GM12878 (cell line): ENCODE measurements at regions of chr1 and their contacts with region 1.

Region 1: DNA sequence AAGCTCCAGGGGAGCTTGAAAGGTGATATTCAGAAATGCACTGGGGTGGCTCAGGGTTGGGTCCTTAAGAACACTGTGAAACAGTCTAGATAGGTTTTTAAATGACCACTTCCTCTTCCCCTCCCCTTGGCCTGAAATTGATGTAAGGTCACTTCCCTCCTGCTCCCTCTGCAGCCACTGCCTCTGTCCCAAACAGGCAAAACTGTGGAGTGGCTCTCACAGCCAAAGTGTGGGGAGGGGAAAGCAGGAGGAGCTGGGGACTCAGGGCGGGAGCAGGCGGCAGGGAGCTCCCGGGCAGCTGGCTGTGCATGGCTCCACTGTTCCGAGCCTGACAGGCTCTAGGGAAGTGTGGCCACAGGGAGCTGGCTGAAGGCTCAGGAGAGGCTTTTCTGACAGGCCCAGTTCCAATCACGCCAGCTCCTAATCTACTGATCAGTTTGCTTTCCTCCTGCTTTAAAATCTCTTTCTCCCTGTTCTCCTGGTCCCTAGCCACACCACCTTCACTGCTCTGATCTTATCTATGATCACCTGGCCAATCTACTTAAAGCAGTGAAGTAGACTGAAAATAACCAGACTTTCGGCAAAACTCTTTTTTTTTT is 5.1 kb upstream of the CSRP1 start:
- DNase-seq: peak; percentile 35
- ATAC-seq: peak; percentile 73
- H3K4me3 ChIP-seq: peak overlapping the region; percentile 43; the same call in 1 of the 2 replicates
- H3K27ac ChIP-seq: no peak overlapping the region; the same call in none of the 2 replicates
- H3K4me1 ChIP-seq: peaks cover 42% of the 10 kb centered on the region
- H3K27me3 ChIP-seq: no peaks in the 10 kb centered on the region
- CTCF ChIP-seq: peak in 1 of 3 experiments; percentile 3; a peak in 1 of 6 replicates
- EP300 ChIP-seq: no peak
- POLR2A ChIP-seq: no peak
- RAD21 ChIP-seq: no peak

Region 2: GRCh38 chr1:201348211-201348566 is 163.9 kb before region 1 on chr1:
- CTCF ChIA-PET with region 1: interaction called, 15 read pairs
- POLR2A ChIA-PET with region 1: no interaction called
- RAD21 ChIA-PET with region 1: interaction called, 19 read pairs
- SMC1A ChIA-PET with region 1: interaction called, 6 read pairs
- in situ Hi-C with region 1: no loop called
- intact Hi-C with region 1: no loop called
- DNase-seq: no peak
- ATAC-seq: peak; percentile 89
- H3K4me3 ChIP-seq: no peak overlapping the region
- H3K27ac ChIP-seq: no peak overlapping the region
- H3K4me1 ChIP-seq: no peaks in the 10 kb centered on the region
- H3K27me3 ChIP-seq: peaks cover 0 to 3% of the 10 kb centered on the region in 2 experiments; a peak in 2 of 4 replicates
- CTCF ChIP-seq: peak; percentile 72 to 78 (median 74)
- EP300 ChIP-seq: no peak
- POLR2A ChIP-seq: no peak
- RAD21 ChIP-seq: peak; percentile 58

Region 3: DNA sequence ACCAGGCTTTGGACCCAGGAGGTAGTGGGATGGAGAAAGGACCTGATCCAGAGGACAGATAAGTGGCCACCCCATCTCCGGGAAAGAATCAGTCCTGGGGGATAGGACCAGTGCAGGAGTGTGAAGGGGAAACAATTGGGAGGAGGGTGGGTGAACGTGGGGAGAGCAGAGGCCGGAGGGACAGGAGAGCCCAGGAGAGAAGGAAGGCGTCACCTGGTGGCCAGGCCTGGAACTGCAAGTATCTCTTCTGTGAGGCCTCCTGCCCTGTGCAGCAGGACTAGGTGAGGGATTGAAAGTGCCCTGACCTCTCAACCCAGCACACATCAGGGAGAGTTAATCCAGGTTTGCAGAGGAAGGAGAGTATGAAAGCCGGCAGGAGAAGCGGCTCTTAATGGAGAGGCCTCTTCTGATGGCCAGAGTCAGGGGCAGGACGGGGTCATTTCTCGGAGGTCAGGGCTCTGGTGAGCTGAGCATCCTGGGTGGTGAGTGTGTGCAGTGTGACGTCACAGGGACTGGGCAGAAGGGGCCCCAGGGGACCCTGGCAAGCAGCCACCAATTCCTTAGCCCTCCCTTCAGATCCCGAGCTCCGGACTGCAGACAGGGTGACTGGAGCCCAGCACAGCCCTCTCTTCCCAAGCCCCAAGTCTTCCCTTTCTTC is 103.7 kb before region 1 on chr1:
- CTCF ChIA-PET with region 1: interaction called, 50 read pairs
- POLR2A ChIA-PET with region 1: interaction called, 3 read pairs
- RAD21 ChIA-PET with region 1: interaction called, 11 read pairs
- SMC1A ChIA-PET with region 1: interaction called, 7 read pairs
- in situ Hi-C with region 1: no loop called
- intact Hi-C with region 1: no loop called
- DNase-seq: no peak
- ATAC-seq: peak; percentile 51
- H3K4me3 ChIP-seq: no peak overlapping the region
- H3K27ac ChIP-seq: no peak overlapping the region
- H3K4me1 ChIP-seq: peaks cover 35% of the 10 kb centered on the region
- H3K27me3 ChIP-seq: no peaks in the 10 kb centered on the region; a peak in 1 of 4 replicates
- CTCF ChIP-seq: peak; percentile 96 to 99 (median 98); a peak in 5 of 6 replicates
- EP300 ChIP-seq: no peak
- POLR2A ChIP-seq: no peak
- RAD21 ChIP-seq: peak; percentile 70

Region 4: GRCh38 chr1:201447911-201448871 is 63.8 kb before region 1 on chr1:
- CTCF ChIA-PET with region 1: interaction called, 309 read pairs
- POLR2A ChIA-PET with region 1: interaction called, 32 read pairs
- RAD21 ChIA-PET with region 1: interaction called, 146 read pairs
- SMC1A ChIA-PET with region 1: interaction called, 103 read pairs
- in situ Hi-C with region 1: loop called (anchors 5 kb)
- intact Hi-C with region 1: loop called (anchors 1 kb)
- DNase-seq: no peak
- ATAC-seq: peak; percentile 98
- H3K4me3 ChIP-seq: no peak overlapping the region
- H3K27ac ChIP-seq: no peak overlapping the region
- H3K4me1 ChIP-seq: peaks cover 16% of the 10 kb centered on the region
- H3K27me3 ChIP-seq: no peaks in the 10 kb centered on the region
- CTCF ChIP-seq: peak; percentile 87 to 95 (median 91)
- EP300 ChIP-seq: no peak
- POLR2A ChIP-seq: no peak
- RAD21 ChIP-seq: peak; percentile 77

Region 5: DNA sequence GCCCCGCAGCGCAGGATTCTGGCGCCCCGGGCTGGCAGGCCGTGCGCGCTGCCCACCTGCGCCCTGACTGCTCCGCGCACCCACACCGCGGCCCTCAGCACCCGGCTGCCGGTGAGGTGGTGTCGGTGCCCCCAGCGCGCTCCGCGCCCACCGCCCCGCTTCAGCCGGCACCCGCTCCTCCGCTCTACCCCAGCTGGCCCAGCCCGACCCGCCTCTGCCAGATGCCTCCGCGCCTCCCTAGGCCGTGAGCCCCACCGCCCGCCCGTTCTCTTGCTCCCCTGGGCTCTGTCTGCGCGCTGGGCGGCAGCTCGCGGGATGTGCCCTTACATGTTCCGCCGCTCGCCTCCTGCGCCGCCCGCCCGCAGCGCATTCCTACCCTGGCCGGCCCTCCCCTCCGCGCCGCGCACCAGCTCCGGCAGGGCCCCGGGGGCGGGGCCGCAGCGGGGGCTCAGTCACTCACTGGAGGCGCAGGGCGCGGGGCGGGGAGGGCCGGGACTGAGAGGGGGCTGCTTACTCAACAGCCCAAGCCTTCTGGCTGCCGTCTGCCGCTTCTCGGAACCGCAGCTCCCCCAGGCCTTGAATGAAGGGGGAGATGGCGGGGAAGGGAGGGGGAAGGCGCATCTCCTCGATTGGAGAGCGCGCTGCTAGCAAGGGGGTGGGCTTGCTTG is 43.1 kb before region 1 on chr1 and contains the start of gene PHLDA3:
- CTCF ChIA-PET with region 1: interaction called, 19 read pairs
- POLR2A ChIA-PET with region 1: interaction called, 5 read pairs
- RAD21 ChIA-PET with region 1: interaction called, 7 read pairs
- SMC1A ChIA-PET with region 1: interaction called, 4 read pairs
- in situ Hi-C with region 1: no loop called
- intact Hi-C with region 1: no loop called
- DNase-seq: no peak
- ATAC-seq: peak; percentile 88
- H3K4me3 ChIP-seq: peak within 1 kb of the TSS; percentile 96
- H3K27ac ChIP-seq: peak within 1 kb of the TSS; percentile 67
- H3K4me1 ChIP-seq: peaks cover 11% of the 10 kb centered on the region
- H3K27me3 ChIP-seq: no peaks in the 10 kb centered on the region
- CTCF ChIP-seq: no peak
- EP300 ChIP-seq: 0 out of 4 replicates have a peak, but pooled peaks of 1 of the 2 experiments have one; percentile 17
- POLR2A ChIP-seq: peak; percentile 89
- RAD21 ChIP-seq: no peak
- polyA plus RNA-seq, gene PHLDA3: 0.60 to 2.0 TPM

Region 6: DNA sequence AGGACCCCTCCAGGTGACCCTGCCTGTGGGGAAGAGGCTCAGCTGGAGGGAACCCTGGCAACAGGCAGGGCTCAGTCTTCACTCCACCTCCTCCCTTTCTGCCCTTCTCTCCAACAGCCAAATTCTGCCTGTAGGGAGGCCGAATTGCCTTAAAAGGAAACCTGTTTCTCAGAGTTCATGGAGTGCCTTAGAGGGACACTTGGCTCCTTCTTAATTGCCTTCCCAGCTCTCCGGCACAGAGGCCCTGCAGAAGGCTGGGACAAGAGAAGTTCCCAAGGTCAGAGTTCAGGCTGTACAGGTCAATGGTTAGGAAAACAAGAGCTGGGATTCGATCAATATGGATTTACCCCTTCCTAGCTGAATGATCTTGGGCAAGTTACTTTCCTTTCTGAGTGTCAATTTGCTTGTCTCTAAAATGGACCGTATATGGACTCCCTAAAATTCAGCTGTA is 11.3 kb before region 1 on chr1:
- CTCF ChIA-PET with region 1: interaction called, 144 read pairs
- POLR2A ChIA-PET with region 1: interaction called, 6 read pairs
- RAD21 ChIA-PET with region 1: interaction called, 22 read pairs
- SMC1A ChIA-PET with region 1: interaction called, 56 read pairs
- in situ Hi-C with region 1: no loop called
- intact Hi-C with region 1: no loop called
- DNase-seq: no peak
- ATAC-seq: no peak
- H3K4me3 ChIP-seq: no peak overlapping the region
- H3K27ac ChIP-seq: no peak overlapping the region
- H3K4me1 ChIP-seq: peaks cover 4% of the 10 kb centered on the region; the same call in 1 of the 2 replicates
- H3K27me3 ChIP-seq: no peaks in the 10 kb centered on the region
- CTCF ChIP-seq: no peak
- EP300 ChIP-seq: no peak
- POLR2A ChIP-seq: no peak
- RAD21 ChIP-seq: no peak

Region 7: DNA sequence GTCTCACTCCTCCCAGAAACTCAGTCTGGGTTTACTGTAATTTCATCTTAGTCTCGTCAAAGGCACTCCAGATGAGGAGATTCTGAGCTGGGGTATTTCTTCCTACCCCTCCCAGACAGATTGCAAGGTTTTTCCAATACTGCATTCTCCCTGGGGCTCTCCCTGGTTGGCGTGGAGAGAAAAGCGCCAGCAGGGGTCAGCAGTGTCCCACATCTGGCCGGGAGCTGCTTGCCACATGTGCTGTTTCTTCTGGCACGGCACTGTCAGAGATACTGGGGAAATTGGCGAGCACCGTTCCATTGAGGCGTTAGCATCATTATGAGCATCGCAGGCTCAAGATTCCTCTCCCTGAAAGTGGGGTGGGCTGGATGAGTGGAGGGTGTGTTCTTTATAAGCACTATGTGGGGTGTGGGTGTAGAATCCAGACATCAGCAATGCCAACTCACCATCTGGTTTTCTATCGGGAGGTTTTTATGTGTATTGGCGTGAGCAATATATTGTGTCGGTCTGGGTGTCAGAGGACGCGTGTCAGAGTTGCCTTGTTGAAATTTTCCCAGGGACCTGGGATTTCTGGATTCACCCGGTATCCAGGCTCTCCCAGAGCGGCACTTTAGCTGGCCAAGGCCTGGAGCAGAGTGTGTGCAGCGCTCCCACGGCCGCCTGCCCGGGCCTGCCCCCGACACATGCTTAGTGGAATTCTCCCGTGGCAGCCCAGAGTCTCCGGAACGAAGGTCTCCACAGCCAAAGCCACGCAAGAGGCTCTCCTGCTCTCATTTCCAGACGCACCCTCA is 18.9 kb after region 1 on chr1:
- CTCF ChIA-PET with region 1: interaction called, 47 read pairs
- POLR2A ChIA-PET with region 1: no interaction called
- RAD21 ChIA-PET with region 1: interaction called, 3 read pairs
- SMC1A ChIA-PET with region 1: interaction called, 5 read pairs
- in situ Hi-C with region 1: no loop called
- intact Hi-C with region 1: no loop called
- DNase-seq: no peak
- ATAC-seq: peak; percentile 90
- H3K4me3 ChIP-seq: no peak overlapping the region
- H3K27ac ChIP-seq: no peak overlapping the region
- H3K4me1 ChIP-seq: no peaks in the 10 kb centered on the region
- H3K27me3 ChIP-seq: no peaks in the 10 kb centered on the region
- CTCF ChIP-seq: peak; percentile 72 to 83 (median 75)
- EP300 ChIP-seq: no peak
- POLR2A ChIP-seq: no peak
- RAD21 ChIP-seq: peak; percentile 64

Region 8: DNA sequence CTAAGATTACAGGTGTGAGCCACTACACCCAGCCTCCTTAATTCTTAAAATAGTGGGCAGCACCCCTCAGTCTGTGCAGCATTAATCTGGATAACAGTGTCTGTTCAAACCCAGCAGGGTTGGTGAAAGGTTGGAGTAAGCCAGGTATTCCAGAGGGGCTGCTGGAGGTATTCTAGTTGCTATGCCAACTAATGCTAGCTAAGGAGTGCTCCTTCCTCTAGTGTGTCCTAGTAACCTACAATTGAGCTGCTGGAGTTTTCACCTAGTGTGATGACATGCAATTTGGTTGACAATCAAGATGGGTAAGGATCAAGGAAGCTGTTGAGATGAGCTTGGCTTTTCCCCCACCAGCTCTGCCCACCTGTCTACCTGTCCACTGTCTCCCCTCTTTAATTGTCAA is 216.7 kb after region 1 on chr1:
- CTCF ChIA-PET with region 1: no interaction called
- POLR2A ChIA-PET with region 1: no interaction called
- RAD21 ChIA-PET with region 1: no interaction called
- SMC1A ChIA-PET with region 1: no interaction called
- in situ Hi-C with region 1: no loop called
- intact Hi-C with region 1: no loop called
- DNase-seq: no peak
- ATAC-seq: no peak
- H3K4me3 ChIP-seq: no peak overlapping the region
- H3K27ac ChIP-seq: no peak overlapping the region
- H3K4me1 ChIP-seq: no peaks in the 10 kb centered on the region
- H3K27me3 ChIP-seq: peaks cover 3 to 5% of the 10 kb centered on the region in 2 experiments; a peak in 3 of 4 replicates
- CTCF ChIP-seq: no peak
- EP300 ChIP-seq: no peak
- POLR2A ChIP-seq: no peak
- RAD21 ChIP-seq: no peak

Region 9: DNA sequence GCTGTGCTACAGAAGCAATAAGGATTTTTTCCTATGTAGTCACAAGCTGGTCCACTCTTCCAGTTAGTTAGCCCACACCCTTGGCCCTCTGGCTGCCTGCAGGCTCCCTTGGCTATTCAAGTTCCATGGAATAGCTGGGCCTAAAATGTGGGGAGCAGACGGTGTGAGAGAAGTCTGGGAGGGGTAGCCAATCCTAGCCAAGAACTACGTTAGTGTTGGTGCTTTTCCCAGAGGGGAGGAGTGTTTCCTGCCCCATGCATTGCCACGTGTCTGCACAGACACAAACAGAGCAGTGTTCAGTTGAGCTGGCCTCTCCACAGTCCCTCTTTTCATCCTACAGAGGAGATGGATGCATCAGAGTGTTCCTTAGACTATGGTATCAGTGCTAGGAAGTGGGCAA is 257.9 kb after region 1 on chr1:
- CTCF ChIA-PET with region 1: no interaction called
- POLR2A ChIA-PET with region 1: no interaction called
- RAD21 ChIA-PET with region 1: no interaction called
- SMC1A ChIA-PET with region 1: no interaction called
- in situ Hi-C with region 1: no loop called
- intact Hi-C with region 1: no loop called
- DNase-seq: no peak
- ATAC-seq: no peak
- H3K4me3 ChIP-seq: no peak overlapping the region
- H3K27ac ChIP-seq: no peak overlapping the region
- H3K4me1 ChIP-seq: no peaks in the 10 kb centered on the region
- H3K27me3 ChIP-seq: 0 out of 4 replicates have a peak, but pooled peaks cover 0 to 2% of the 10 kb centered on the region in 2 experiments
- CTCF ChIP-seq: no peak
- EP300 ChIP-seq: no peak
- POLR2A ChIP-seq: no peak
- RAD21 ChIP-seq: no peak